ENCODE measurements at regions of chr20 and their contacts with region 1.

Region 1: DNA sequence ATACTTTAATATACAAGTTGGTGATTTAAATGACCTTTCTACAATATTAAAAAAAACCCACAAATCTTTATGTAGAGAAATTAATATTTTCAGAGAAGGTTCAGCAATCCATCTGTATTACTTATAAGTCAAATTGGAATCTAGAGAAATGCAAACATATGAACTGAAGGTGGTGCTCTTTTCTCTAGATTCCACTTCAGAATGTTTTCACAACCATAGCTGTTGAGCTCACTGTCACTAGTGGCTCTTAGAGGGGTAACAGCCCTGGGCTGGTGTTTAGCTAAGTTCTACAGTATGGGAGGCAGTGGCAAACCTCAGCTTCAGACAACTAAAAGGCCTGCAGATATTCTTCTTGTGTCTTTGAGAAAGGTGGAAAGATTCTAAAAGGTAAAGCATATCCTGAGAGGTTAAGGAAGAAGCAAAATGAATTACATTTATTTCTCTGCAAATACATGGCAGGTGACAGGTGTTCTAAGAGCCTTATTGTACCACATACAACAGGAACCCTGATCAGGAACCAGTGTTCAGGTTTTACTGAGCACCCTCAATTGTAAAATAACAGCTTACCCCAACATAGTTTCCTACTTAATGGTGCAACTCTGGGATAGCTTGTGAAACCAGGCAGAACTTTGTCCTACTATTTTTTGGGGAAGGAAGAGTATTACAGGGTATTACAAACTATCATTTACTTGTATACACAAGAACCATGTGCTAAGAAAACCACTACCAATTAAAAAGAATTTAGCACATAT is 56.6 kb upstream of the SAMHD1 start:
- DNase-seq: peak in 7 of 9 donors; percentile 60 to 80 (median 64)
- ATAC-seq: peak; percentile 93
- H3K4me3 ChIP-seq: no peak overlapping the region
- H3K4me3 Mint-ChIP-seq: peak overlapping the region in 6 of 10 donors; percentile 29 to 72 (median 48)
- H3K27ac ChIP-seq: peak overlapping the region; percentile 59
- H3K27ac Mint-ChIP-seq: peak overlapping the region; percentile 73 to 97 (median 89)
- H3K4me1 ChIP-seq: peaks cover 6 to 7% of the 10 kb centered on the region in 2 donors
- H3K4me1 Mint-ChIP-seq: peaks cover 14 to 39% (median 35%) of the 10 kb centered on the region in 7 donors
- H3K27me3 ChIP-seq: no peaks in the 10 kb centered on the region
- H3K27me3 Mint-ChIP-seq: no peaks in the 10 kb centered on the region

Region 2: DNA sequence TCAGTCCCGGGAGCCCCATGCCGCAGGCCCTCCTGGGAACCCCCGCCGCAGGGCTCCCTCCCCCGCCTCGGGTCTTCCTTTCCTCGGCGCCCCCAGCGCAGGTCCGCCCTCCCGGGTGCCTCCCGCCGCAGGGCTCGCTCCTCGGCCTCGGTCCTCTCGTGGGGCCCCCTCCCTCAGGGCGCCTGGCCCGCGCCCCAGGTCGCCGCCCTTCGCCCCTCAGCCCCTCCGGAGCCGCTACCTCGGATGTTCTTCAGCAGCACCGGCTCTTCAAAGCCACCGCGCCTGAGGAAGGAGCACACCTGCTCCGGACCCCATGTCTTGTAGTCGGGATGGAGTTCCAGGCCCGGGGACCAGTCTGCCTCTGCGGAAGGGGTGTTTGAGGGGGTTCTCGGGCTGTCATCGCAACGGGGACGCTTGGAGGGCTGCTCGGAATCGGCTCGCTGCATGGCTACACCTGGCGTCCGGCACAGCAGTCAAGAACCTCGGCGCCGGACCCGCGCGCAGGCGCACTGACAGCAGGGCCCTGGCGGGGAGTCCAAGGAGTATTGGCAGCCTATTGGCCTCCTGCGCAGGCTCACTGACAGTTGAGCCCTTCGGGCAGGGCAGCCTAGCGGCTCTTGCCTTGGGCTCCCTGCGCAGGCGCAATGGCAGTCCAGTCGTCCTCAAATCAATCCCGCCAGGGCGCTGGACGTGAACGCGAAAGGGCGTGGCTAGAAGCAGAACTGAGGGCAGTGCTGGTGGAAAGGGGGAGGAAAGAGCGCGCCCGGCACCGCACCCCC is 56.7 kb before region 1 on chr20 and contains the start of gene SAMHD1:
- CTCF ChIA-PET with region 1: interaction called, 7 read pairs
- POLR2A ChIA-PET with region 1: interaction called, 8 read pairs
- intact Hi-C with region 1: loop called in 1 of 2 experiments (anchors 1 kb)
- DNase-seq: peak; percentile 72 to 93 (median 81)
- ATAC-seq: peak; percentile 86
- H3K4me3 ChIP-seq: peak within 1 kb of the TSS; percentile 94
- H3K4me3 Mint-ChIP-seq: peak within 1 kb of the TSS; percentile 93 to 99 (median 98)
- H3K27ac ChIP-seq: peak within 1 kb of the TSS; percentile 97
- H3K27ac Mint-ChIP-seq: peak within 1 kb of the TSS; percentile 96 to 99 (median 98)
- H3K4me1 ChIP-seq: peaks cover 40 to 45% of the 10 kb centered on the region in 2 donors
- H3K4me1 Mint-ChIP-seq: peaks cover 28 to 50% (median 37%) of the 10 kb centered on the region in 7 donors
- H3K27me3 ChIP-seq: no peaks in the 10 kb centered on the region
- H3K27me3 Mint-ChIP-seq: no peaks in the 10 kb centered on the region
- total RNA-seq, gene SAMHD1: 271 to 393 (median 338) TPM

Region 3: GRCh38 chr20:37020636-37021035 is 12.6 kb after region 1 on chr20:
- CTCF ChIA-PET with region 1: interaction called, 9 read pairs
- POLR2A ChIA-PET with region 1: interaction called, 21 read pairs
- intact Hi-C with region 1: loop called in 1 of 2 experiments (anchors 2 kb)
- DNase-seq: no peak
- ATAC-seq: no peak
- H3K4me3 ChIP-seq: no peak overlapping the region
- H3K4me3 Mint-ChIP-seq: no peak overlapping the region
- H3K27ac ChIP-seq: no peak overlapping the region
- H3K27ac Mint-ChIP-seq: no peak overlapping the region
- H3K4me1 ChIP-seq: peaks cover 6 to 14% of the 10 kb centered on the region in 2 donors
- H3K4me1 Mint-ChIP-seq: peaks cover 9 to 43% (median 37%) of the 10 kb centered on the region in 7 donors
- H3K27me3 ChIP-seq: no peaks in the 10 kb centered on the region
- H3K27me3 Mint-ChIP-seq: no peaks in the 10 kb centered on the region

Region 4: GRCh38 chr20:37081717-37082289 is 73.7 kb after region 1 on chr20:
- CTCF ChIA-PET with region 1: interaction called, 113 read pairs
- POLR2A ChIA-PET with region 1: interaction called, 22 read pairs
- intact Hi-C with region 1: loop called (anchors 1 kb)
- DNase-seq: peak in 7 of 9 donors; percentile 21 to 64 (median 54)
- ATAC-seq: peak; percentile 61
- H3K4me3 ChIP-seq: no peak overlapping the region
- H3K4me3 Mint-ChIP-seq: peak overlapping the region in 3 of 10 donors; percentile 5 to 42 (median 17)
- H3K27ac ChIP-seq: no peak overlapping the region
- H3K27ac Mint-ChIP-seq: peak overlapping the region; percentile 62 to 89 (median 82)
- H3K4me1 ChIP-seq: peaks cover 12% of the 10 kb centered on the region in 2 donors
- H3K4me1 Mint-ChIP-seq: peaks cover 2 to 37% (median 29%) of the 10 kb centered on the region in 7 donors
- H3K27me3 ChIP-seq: no peaks in the 10 kb centered on the region
- H3K27me3 Mint-ChIP-seq: no peaks in the 10 kb centered on the region

Region 5: DNA sequence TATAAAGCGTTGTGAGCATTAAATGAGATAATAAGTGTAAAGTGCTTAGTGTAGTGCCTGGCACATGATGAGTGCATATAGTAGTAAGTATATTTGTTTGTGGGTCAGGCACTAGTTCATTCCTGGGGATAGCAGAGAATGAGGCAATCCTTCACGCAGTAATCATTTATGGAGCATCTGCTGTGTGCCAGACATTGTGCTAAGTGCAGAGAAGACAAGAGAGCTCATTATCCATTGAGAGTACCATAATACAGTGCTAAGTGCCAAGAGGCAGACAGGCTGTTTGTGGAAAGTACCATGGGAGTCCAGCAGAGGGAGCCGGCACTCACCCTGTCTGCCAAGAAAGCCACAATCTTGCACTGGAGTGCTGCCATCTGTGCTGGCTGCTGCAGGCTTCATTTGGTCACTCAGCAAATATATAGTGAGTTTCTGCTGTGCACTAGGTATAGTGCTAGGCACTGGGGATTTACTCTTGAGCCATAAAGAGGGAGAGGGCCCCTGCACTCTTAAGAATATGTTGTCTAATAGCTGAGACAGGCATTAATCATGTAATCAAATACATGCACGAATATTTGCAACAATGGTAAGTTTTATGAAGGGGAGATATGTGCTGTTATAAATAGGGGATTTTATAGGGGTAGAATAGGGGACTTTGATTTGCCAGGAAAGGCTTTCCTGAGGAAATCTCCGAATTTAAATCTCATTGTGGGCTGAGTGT is 184.2 kb after region 1 on chr20:
- CTCF ChIA-PET with region 1: interaction called, 13 read pairs
- POLR2A ChIA-PET with region 1: no interaction called
- intact Hi-C with region 1: loop called in 1 of 2 experiments (anchors 1 kb)
- DNase-seq: peak; percentile 31 to 71 (median 60)
- ATAC-seq: peak; percentile 89
- H3K4me3 ChIP-seq: no peak overlapping the region
- H3K4me3 Mint-ChIP-seq: peak overlapping the region in 3 of 10 donors; percentile 7 to 44 (median 13)
- H3K27ac ChIP-seq: no peak overlapping the region
- H3K27ac Mint-ChIP-seq: peak overlapping the region in 8 of 9 donors; percentile 36 to 94 (median 66)
- H3K4me1 ChIP-seq: peaks cover 36 to 46% of the 10 kb centered on the region in 2 donors
- H3K4me1 Mint-ChIP-seq: peaks cover 64 to 84% (median 80%) of the 10 kb centered on the region in 7 donors
- H3K27me3 ChIP-seq: no peaks in the 10 kb centered on the region
- H3K27me3 Mint-ChIP-seq: no peaks in the 10 kb centered on the region

Region 6: GRCh38 chr20:37345339-37346230 is 337.5 kb after region 1 on chr20 and contains the start of gene SRC:
- CTCF ChIA-PET with region 1: no interaction called
- POLR2A ChIA-PET with region 1: no interaction called
- intact Hi-C with region 1: no loop called
- DNase-seq: peak in 8 of 9 donors; percentile 20 to 60 (median 33)
- ATAC-seq: peak; percentile 62
- H3K4me3 ChIP-seq: peak within 1 kb of the TSS; percentile 55
- H3K4me3 Mint-ChIP-seq: peak within 1 kb of the TSS; percentile 44 to 81 (median 71)
- H3K27ac ChIP-seq: peak within 1 kb of the TSS; percentile 50
- H3K27ac Mint-ChIP-seq: peak within 1 kb of the TSS in 4 of 9 donors; percentile 9 to 45 (median 28)
- H3K4me1 ChIP-seq: peaks cover 0 to 5% of the 10 kb centered on the region in 2 donors
- H3K4me1 Mint-ChIP-seq: peaks cover 0 to 25% (median 13%) of the 10 kb centered on the region in 7 donors
- H3K27me3 ChIP-seq: no peaks in the 10 kb centered on the region
- H3K27me3 Mint-ChIP-seq: peaks cover 0 to 1% (median 0%) of the 10 kb centered on the region in 5 donors
- total RNA-seq, gene SRC: 2.8 to 26.6 (median 4.4) TPM